KBM-7 (cell line): ENCODE measurements at regions of chr19 and their contacts with region 1.

Region 1: GRCh38 chr19:46850228-46851203 is at the start of gene AP2S1:
- DNase-seq: peak; percentile 99

Region 2: DNA sequence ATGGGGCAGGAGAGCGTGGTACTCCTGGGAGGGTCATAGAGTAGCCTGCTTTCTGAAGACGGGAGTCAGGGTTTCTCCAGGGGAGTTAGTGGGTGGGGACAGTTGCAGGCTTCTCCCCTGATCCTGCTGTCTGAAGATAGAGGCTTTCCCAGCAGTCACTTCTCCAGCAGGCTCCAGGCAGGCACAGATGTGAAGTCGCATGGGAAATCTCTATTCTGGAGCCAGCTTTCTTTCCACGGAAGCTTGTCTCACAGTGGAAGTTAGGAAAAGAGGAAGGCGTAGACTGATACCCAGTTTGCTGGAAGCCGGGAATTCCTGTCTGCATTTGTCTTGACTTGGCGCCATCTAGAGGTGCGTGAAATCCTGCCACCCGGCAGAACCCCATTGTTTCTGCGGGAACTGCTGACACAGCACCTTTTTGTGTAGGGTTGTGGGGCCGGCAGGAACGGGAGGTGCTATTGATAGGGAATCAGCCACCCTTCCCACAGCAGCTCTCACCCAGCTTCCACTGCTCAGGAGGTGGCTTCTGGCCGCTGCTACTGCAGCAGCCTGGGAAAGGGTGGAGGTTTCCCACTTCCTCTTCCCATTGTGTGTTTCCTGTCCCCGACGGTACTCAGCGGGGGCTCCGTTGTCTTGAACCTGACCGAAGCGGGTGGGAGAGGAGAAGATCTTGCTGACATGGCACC is 140.6 kb after region 1 on chr19:
- in situ Hi-C with region 1: loop called (anchors 10 kb)
- DNase-seq: peak; percentile 74